Adrenal gland (tissue), 19 donors: ENCODE measurements at regions of chr11 and their contacts with region 1.

Region 1: GRCh38 chr11:63023841-63024648 is 8.4 kb upstream of the SLC22A8 start:
- DNase-seq: peak; percentile 85 to 96 (median 89)
- H3K4me3 ChIP-seq: no peak overlapping the region
- H3K27ac ChIP-seq: no peak overlapping the region
- H3K4me1 ChIP-seq: no peaks in the 10 kb centered on the region
- H3K27me3 ChIP-seq: no peaks in the 10 kb centered on the region
- CTCF ChIP-seq: peak; percentile 98 to 100 (median 99)
- POLR2A ChIP-seq: no peak

Region 2: DNA sequence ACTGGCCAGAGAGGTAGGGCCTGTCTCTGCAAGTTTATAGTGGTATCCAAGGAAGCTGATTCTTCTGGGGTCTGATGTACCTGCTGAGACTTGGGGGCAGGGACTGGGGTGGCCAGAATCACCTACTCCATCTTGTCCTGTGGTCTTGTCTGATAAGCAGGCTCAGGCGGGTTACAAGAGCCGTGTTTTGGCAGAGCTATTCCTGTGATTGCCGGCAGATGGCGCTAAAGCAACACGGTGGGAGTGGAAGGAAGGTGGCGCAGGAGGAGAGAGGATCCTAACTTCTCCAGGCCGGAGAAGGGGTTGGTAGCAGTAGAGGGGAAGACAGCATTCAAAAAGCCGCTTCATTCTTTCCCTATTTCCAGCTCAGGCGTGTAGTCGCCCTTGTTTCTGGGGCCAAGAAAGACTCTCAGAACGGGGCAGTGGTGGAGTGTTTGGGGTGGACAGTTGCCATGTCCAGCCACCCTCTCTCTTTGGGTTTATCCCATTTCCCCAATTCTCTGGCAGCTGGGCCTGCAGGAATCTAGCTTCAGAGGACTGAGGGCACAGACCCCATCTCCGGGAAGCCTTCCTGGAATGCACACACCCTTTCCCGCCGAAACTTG is 118.0 kb before region 1 on chr11:
- intact Hi-C with region 1: loop called (anchors 1 to 5 kb)
- DNase-seq: peak; percentile 66 to 93 (median 78)
- H3K4me3 ChIP-seq: no peak overlapping the region
- H3K27ac ChIP-seq: no peak overlapping the region
- H3K4me1 ChIP-seq: no peaks in the 10 kb centered on the region
- H3K27me3 ChIP-seq: no peaks in the 10 kb centered on the region
- CTCF ChIP-seq: peak; percentile 97 to 99 (median 99)
- POLR2A ChIP-seq: no peak